Aorta (tissue), 5 donors: ENCODE measurements at regions of chr7 and their contacts with region 1.

Region 1: GRCh38 chr7:151251973-151252835 is 3.7 kb upstream of the SMARCD3 start:
- DNase-seq: peak; percentile 78 to 91
- ATAC-seq: peak; percentile 68
- H3K4me3 ChIP-seq: peak overlapping the region; percentile 72 to 82
- H3K27ac ChIP-seq: peak overlapping the region; percentile 62 to 91
- H3K4me1 ChIP-seq: no peaks in the 10 kb centered on the region
- H3K27me3 ChIP-seq: no peaks in the 10 kb centered on the region

Region 2: DNA sequence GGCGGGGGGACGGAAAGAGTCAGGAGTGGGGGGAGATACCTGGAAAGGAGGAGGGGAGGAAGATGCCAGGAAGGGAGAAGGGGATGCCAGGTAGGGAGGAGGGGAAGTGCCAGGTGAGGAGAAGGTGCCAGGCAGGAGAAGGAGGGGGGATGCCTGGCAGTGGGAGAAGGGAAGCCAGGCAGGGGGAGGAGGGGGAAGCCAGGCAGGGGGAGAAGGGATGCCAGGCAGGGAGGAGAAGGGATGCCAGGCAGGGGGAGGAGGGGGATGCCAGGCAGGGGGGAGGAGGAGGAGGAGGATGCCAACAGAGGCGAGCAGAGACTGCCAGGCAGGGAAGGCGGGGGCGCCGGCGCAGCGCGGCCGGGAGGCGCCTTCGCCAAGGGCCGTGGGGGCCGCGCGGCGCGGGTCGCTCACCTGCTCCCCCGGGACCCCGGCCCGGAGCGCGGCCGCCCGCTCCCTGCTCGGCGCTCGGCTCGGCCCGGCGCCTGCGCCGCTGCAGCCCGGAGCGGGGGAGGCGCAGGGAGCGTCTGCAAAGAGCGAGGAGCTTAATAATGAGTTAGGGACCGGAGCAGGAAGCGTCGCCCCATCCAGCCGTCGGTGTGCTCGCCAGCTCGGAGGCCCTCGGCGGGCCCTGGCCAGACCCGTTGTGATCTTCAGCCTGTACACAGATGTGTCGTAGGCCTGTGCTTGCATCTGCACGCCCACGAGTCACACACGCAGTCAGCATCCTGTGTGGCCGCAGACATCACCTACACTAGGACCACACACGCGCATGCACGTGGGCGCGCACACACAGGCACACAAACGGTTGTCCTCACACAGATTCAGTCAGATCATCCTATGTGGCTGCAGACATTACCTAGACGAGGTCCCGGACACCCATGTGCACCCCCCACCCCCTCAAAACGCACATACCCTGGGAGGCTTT is 24.7 kb after region 1 on chr7:
- intact Hi-C with region 1: loop called in 1 of 2 experiments (anchors 2 kb)
- DNase-seq: peak; percentile 74 to 84
- ATAC-seq: peak; percentile 61
- H3K4me3 ChIP-seq: peak overlapping the region; percentile 28 to 39
- H3K27ac ChIP-seq: no peak overlapping the region
- H3K4me1 ChIP-seq: no peaks in the 10 kb centered on the region
- H3K27me3 ChIP-seq: no peaks in the 10 kb centered on the region

Region 3: DNA sequence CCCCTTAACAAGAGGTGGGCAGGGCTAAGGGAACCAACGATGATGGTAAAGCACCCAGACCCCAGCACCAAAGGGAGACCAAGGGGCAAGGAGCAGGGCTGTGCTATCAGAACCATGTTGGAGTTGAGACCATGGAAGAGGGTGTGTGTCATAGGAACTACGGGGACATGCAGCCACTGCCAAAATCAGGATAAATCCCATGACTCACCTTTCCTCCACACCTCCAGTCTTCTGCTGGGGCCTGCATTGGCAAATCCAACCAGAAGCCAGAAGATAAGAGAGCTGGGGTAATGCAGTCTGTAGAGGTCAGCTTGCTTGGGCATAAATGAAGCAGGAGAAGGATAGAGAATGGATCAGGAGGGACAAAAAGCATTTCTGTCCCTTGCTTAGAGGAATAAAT is 39.0 kb after region 1 on chr7:
- intact Hi-C with region 1: no loop called
- DNase-seq: no peak
- ATAC-seq: no peak
- H3K4me3 ChIP-seq: no peak overlapping the region
- H3K27ac ChIP-seq: no peak overlapping the region
- H3K4me1 ChIP-seq: no peaks in the 10 kb centered on the region
- H3K27me3 ChIP-seq: no peaks in the 10 kb centered on the region